ENCODE measurements at regions of chr1 and their contacts with region 1.

Region 1: GRCh38 chr1:212455803-212456528 is 23.2 kb downstream of the NENF start:
- DNase-seq: peak; percentile 82 to 94 (median 94)
- ATAC-seq: peak; percentile 75 to 78
- H3K4me3 ChIP-seq: no peak overlapping the region
- H3K27ac ChIP-seq: peak overlapping the region; percentile 69
- H3K4me1 ChIP-seq: peaks cover 3% of the 10 kb centered on the region
- H3K27me3 ChIP-seq: no peaks in the 10 kb centered on the region

Region 2: GRCh38 chr1:211698161-211699026 is 757.6 kb before region 1 on chr1:
- intact Hi-C with region 1: loop called in 1 of 4 experiments (anchors 10 kb)
- DNase-seq: peak; percentile 64 to 90 (median 89)
- ATAC-seq: peak; percentile 82 to 86
- H3K4me3 ChIP-seq: no peak overlapping the region
- H3K27ac ChIP-seq: no peak overlapping the region
- H3K4me1 ChIP-seq: peaks cover 2% of the 10 kb centered on the region
- H3K27me3 ChIP-seq: no peaks in the 10 kb centered on the region

Region 3: GRCh38 chr1:212315907-212316306 is 140.1 kb before region 1 on chr1:
- intact Hi-C with region 1: loop called in 1 of 4 experiments (anchors 10 kb)
- DNase-seq: no peak
- ATAC-seq: peak; percentile 49 to 60
- H3K4me3 ChIP-seq: no peak overlapping the region
- H3K27ac ChIP-seq: peak overlapping the region; percentile 52
- H3K4me1 ChIP-seq: no peaks in the 10 kb centered on the region
- H3K27me3 ChIP-seq: no peaks in the 10 kb centered on the region

Region 4: DNA sequence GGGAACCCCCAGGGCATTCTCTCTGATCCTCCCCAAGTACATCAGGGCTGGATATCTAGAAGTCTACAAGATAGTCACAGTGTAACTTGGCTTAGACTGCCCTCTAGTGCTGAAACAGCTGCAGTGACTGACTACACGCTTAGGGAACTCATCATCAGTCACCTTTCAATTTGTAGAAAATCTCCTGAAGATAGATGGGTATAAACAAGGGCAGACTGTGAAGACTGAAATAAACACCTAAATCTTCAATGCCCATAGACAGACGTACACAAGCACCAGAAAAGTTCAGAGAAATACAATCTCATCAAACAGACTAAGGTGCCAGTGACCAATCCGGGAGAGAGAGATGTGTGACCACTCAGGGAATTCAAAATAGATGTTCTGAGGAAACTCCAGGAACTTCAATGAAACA is 87.9 kb before region 1 on chr1:
- intact Hi-C with region 1: loop called in 2 of 4 experiments (anchors 10 kb)
- DNase-seq: peak in 1 of 3 donors; percentile 35
- ATAC-seq: peak; percentile 75 to 88
- H3K4me3 ChIP-seq: no peak overlapping the region
- H3K27ac ChIP-seq: no peak overlapping the region
- H3K4me1 ChIP-seq: no peaks in the 10 kb centered on the region
- H3K27me3 ChIP-seq: no peaks in the 10 kb centered on the region

Region 5: DNA sequence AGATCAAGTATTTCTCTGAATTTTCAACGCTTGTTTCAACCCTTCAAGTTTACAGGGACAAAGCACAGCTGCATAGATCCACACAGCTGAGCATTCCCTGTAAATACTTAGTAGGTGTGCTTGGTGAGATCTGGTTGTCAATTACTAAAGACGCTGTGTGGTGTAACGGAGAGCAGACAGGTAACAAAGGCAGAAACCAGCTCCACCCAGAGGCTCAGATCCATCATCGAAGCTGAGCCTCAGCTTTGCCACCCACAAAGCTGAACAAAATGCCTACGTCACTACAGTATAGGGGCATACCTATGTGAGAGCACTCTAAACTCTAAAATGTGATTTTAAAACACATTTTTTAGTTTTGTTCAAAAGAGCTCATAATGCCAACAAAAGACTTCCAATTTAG is 80.0 kb before region 1 on chr1:
- intact Hi-C with region 1: loop called in 1 of 4 experiments (anchors 10 kb)
- DNase-seq: no peak
- ATAC-seq: no peak
- H3K4me3 ChIP-seq: no peak overlapping the region
- H3K27ac ChIP-seq: no peak overlapping the region
- H3K4me1 ChIP-seq: no peaks in the 10 kb centered on the region
- H3K27me3 ChIP-seq: no peaks in the 10 kb centered on the region

Region 6: GRCh38 chr1:212386029-212386428 is 69.9 kb before region 1 on chr1:
- intact Hi-C with region 1: no loop called
- DNase-seq: no peak
- ATAC-seq: peak in 1 of 2 donors; percentile 16
- H3K4me3 ChIP-seq: no peak overlapping the region
- H3K27ac ChIP-seq: no peak overlapping the region
- H3K4me1 ChIP-seq: no peaks in the 10 kb centered on the region
- H3K27me3 ChIP-seq: no peaks in the 10 kb centered on the region

Measured in right cardiac atrium (tissue), 5 donors.